ENCODE measurements at regions of chr16 and their contacts with region 1.

Region 1: DNA sequence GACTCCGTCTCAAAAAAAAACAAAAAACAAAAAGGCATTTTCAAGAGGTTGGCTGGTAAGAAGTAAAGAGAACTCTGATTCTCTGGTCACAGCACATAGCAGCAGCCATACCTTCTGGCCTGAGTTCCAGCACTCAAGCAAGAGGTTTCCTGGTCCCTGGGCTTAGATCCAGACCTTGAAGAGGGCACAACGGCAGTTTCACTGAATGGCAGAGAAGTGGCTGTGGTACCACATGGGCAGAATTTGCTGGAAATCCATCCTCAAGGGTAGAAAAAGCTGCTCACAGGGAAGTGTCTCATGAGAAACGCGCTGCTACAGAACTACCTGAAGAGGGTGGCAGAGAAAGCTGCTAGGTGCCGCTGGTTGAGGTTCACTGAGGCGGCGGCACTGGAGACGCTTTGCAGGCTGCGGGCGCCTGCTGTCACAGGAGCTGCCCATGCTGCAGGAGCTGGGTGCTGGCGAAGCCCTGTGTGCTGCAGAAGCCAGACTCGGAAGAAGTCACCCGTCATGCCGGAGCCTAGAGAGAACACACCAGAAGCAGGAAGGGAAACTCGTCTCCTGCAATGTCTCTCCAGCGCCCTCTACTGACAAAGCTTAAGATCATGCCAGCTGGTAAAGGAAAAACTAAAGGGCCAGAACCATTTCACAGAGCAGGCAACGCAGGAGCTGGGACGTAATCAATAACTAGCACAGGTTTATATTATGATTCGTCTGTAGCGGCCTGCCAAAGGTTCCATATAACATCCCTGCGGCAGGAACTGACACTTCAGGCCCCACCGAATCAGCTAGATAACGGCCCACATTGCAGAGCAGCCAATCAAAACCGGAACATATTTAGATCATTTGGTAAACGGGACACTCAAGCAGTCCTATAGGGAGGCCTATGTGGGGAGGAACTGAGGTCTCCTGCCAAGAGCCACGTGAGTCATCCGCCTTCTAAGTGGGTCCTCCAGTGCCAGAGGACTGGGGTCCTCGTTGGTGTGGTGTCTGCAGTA is 5.4 kb upstream of the ZNF213 start:
- DNase-seq: peak; percentile 87
- H3K4me3 Mint-ChIP-seq: peak overlapping the region; percentile 95
- H3K27ac Mint-ChIP-seq: peak overlapping the region; percentile 90
- H3K4me1 Mint-ChIP-seq: peaks cover 53% of the 10 kb centered on the region
- H3K27me3 Mint-ChIP-seq: no peaks in the 10 kb centered on the region

Region 2: DNA sequence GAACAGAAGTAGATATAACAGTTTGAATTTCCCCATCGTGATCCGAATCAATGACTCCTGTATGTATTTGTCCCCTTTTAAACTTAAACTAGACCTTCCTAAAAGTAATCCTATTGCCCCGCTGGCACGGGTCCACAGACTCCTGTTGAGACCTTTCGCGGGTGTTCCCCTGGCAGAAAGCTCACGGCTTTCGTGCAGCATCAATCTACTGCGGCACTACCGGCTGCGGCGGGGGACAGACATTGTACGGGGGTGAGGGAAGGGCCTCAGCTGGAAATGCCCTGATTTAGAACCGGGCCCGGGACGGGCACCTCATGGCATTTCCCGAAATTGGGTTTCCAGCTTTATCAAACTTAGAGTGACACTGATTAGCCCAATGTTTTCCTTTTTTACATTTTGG is 49.4 kb before region 1 on chr16:
- CTCF ChIA-PET with region 1: interaction called, 10 read pairs
- intact Hi-C with region 1: no loop called
- DNase-seq: no peak
- H3K4me3 Mint-ChIP-seq: no peak overlapping the region
- H3K27ac Mint-ChIP-seq: no peak overlapping the region
- H3K4me1 Mint-ChIP-seq: peaks cover 47% of the 10 kb centered on the region
- H3K27me3 Mint-ChIP-seq: no peaks in the 10 kb centered on the region

Region 3: DNA sequence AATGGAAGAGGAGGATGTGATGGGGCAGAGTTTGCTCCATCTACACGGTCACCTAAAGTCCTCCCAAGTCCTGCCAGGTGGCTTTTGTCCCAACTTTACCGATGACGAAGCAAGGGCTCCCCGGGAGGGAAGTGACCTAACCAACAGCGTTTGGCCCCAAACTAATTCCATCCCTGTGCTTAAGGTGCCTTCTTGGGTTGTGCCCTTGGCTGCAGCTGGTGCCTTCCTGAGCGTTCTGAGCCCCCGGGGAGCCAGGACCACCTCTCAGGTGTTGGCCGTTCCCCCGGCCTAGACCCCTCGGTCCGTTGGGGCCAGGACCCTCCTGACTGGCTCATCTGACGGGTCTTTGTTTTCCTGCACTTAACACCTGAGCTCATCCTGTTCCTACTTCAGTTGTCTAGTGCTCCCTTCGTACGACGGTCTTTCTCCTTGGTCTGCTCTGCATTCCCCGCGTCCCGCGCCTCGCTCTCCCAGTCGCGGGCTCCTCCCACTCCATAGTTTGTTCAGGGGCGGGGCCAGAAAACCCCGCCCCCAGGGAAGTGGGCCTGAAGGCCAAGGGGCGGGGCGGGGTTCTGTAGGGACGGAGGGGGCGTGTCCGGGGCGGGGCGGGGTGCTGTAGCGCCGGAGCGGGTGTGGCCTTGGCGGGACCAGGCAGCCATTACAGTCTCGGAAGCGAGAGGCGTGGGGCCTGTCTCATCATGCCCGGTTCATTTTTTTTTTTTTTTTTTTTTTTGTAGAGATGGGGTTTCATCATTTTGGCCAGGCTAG is 29.5 kb before region 1 on chr16:
- CTCF ChIA-PET with region 1: interaction called, 122 read pairs
- intact Hi-C with region 1: loop called (anchors 1 kb)
- DNase-seq: peak; percentile 97
- H3K4me3 Mint-ChIP-seq: peak overlapping the region; percentile 69
- H3K27ac Mint-ChIP-seq: no peak overlapping the region
- H3K4me1 Mint-ChIP-seq: peaks cover 36% of the 10 kb centered on the region
- H3K27me3 Mint-ChIP-seq: no peaks in the 10 kb centered on the region

Region 4: GRCh38 chr16:3140603-3141427 is 11.4 kb after region 1 on chr16:
- CTCF ChIA-PET with region 1: interaction called, 62 read pairs
- intact Hi-C with region 1: no loop called
- DNase-seq: no peak
- H3K4me3 Mint-ChIP-seq: no peak overlapping the region
- H3K27ac Mint-ChIP-seq: no peak overlapping the region
- H3K4me1 Mint-ChIP-seq: peaks cover 7% of the 10 kb centered on the region
- H3K27me3 Mint-ChIP-seq: no peaks in the 10 kb centered on the region

Region 5: GRCh38 chr16:3158471-3159314 is 29.3 kb after region 1 on chr16:
- CTCF ChIA-PET with region 1: interaction called, 10 read pairs
- intact Hi-C with region 1: no loop called
- DNase-seq: peak; percentile 82
- H3K4me3 Mint-ChIP-seq: peak overlapping the region; percentile 89
- H3K27ac Mint-ChIP-seq: peak overlapping the region; percentile 78
- H3K4me1 Mint-ChIP-seq: peaks cover 15% of the 10 kb centered on the region
- H3K27me3 Mint-ChIP-seq: peaks cover 6% of the 10 kb centered on the region

Region 6: GRCh38 chr16:3173892-3174617 is 44.6 kb after region 1 on chr16:
- CTCF ChIA-PET with region 1: interaction called, 37 read pairs
- intact Hi-C with region 1: no loop called
- DNase-seq: peak; percentile 62
- H3K4me3 Mint-ChIP-seq: peak overlapping the region; percentile 70
- H3K27ac Mint-ChIP-seq: peak overlapping the region; percentile 50
- H3K4me1 Mint-ChIP-seq: peaks cover 40% of the 10 kb centered on the region
- H3K27me3 Mint-ChIP-seq: peaks cover 57% of the 10 kb centered on the region

Measured in activated naive CD4-positive, alpha-beta T cell treated with anti-CD3 and anti-CD28 coated beads for 36 hours (primary cell).